Activated CD4-positive, alpha-beta T cell treated with anti-CD3 and anti-CD28 coated beads, Interleukin-2, amount 10 ng/mL, durations not matched to agents 24 days and 14 days (primary cell): ENCODE measurements at regions of chr3 and their contacts with region 1.

Region 1: DNA sequence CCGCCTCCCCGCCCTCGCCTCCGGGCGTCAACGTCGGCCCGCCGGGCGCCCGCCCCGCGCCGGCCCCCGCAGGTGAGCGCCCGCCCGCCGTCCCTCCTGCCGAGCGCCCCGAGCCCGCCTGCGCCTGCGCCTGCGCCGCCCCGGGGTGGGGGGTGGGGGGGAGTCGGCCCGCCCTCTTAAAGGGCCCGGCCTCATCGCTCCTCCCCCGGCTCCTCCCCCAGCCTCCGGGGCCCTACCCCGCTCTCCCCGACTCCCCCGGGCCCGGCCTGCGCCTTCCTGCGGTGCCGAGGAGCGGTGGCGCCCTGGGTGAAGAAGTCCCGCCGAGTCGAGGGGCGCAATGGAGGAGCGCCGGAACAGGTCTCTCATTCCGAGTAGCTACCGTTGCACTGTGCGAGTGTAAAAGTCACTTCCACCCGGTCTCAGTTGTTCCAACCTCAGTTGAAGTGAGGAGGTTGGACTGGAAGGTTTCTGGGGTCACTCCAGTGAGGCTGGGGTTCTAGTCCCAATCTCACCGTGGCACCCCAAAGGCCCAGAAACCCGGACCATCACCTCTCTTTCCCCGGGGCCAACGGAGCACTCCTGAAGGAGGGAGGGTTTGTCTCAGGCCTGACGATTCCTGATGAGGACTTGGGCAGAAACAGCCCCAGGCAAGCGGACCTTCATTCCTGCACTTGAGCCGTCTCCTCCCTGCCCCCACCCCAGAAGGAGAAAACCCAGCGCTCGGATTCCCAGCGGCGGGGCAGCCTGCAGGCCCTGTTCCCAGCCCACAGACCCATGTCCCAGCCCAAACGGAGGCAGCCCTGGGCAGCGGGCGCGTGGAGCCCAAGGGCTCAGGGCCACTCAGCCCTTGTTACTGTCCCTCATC is 1.5 kb upstream of the TNK2 start:
- DNase-seq: peak; percentile 96
- H3K4me3 Mint-ChIP-seq: peak overlapping the region; percentile 66
- H3K27ac Mint-ChIP-seq: peak overlapping the region; percentile 84
- H3K4me1 Mint-ChIP-seq: peaks cover 36% of the 10 kb centered on the region
- H3K27me3 Mint-ChIP-seq: no peaks in the 10 kb centered on the region

Region 2: DNA sequence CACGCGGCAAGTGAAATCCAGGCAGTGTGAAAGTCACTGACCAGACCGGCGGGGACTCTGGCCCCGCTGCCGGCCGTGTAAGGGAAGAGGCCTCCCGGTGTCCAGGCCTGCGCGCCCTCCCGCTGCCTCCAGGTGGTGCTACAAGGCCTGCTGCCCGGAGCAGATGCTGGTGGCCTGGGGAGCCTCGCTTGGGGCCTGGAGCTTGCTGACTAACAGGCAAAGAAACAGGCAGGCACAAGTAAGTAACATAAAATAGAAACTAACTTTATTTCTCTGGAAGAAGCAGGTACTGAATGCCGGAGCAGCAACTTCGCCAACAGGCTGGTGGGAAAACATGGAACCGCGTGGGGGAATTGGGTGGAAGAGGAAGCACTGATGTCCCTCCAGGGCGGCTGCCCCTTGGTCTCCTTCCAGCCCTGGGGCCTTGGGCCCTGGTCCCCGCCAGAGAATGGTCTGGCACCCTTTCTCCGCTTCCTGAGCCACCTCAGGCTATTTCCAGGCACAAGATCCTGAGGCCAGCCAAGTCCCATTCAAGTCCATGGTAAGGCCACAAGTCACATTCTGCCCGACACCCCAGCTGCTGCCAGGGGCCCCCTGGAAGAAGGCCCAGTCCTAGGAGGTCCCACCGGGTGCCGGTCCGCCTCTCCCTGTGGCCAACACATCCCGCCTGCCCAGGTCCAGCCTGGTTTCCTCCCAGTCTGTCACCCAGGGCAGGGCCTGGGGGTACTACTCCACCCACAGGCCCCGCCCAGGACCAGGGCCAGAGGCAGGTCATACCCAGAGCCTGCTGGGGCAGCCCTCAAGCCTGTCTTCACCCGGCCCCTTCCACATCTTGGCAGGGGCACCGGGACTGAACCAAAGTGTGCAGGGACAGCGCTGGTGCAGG is 46.5 kb before region 1 on chr3:
- intact Hi-C with region 1: loop called (anchors 1 kb)
- DNase-seq: peak; percentile 89
- H3K4me3 Mint-ChIP-seq: no peak overlapping the region
- H3K27ac Mint-ChIP-seq: no peak overlapping the region
- H3K4me1 Mint-ChIP-seq: peaks cover 6% of the 10 kb centered on the region
- H3K27me3 Mint-ChIP-seq: peaks cover 2% of the 10 kb centered on the region

Region 3: GRCh38 chr3:195894780-195895607 is 14.9 kb before region 1 on chr3:
- intact Hi-C with region 1: loop called (anchors 1 kb)
- DNase-seq: peak; percentile 91
- H3K4me3 Mint-ChIP-seq: peak overlapping the region; percentile 85
- H3K27ac Mint-ChIP-seq: peak overlapping the region; percentile 95
- H3K4me1 Mint-ChIP-seq: peaks cover 39% of the 10 kb centered on the region
- H3K27me3 Mint-ChIP-seq: no peaks in the 10 kb centered on the region

Region 4: DNA sequence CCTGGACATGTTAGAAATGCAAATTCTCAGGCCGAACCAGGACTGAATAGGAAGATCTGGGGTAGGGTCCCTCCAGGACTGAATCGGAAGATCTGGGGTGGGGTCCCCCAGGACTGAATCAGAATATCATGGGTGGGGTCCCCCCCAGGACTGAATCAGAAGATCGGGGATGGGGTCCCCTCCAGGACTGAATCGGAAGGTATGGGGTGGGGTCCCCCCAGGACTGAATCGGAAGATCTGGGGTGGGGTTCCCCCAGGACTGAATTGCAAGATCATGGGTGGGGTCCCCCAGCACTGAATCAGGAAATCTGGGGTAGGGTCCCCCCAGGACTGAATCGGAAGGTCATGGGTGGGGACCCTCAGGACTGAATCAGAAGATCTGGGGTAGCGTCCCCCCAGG is 46.7 kb after region 1 on chr3:
- intact Hi-C with region 1: loop called (anchors 10 kb)
- DNase-seq: no peak
- H3K4me3 Mint-ChIP-seq: peak overlapping the region; percentile 52
- H3K27ac Mint-ChIP-seq: peak overlapping the region; percentile 89
- H3K4me1 Mint-ChIP-seq: peaks cover 32% of the 10 kb centered on the region
- H3K27me3 Mint-ChIP-seq: no peaks in the 10 kb centered on the region

Region 5: GRCh38 chr3:196219194-196219978 is 309.5 kb after region 1 on chr3:
- intact Hi-C with region 1: no loop called
- DNase-seq: peak; percentile 91
- H3K4me3 Mint-ChIP-seq: peak overlapping the region; percentile 69
- H3K27ac Mint-ChIP-seq: peak overlapping the region; percentile 89
- H3K4me1 Mint-ChIP-seq: peaks cover 13% of the 10 kb centered on the region
- H3K27me3 Mint-ChIP-seq: no peaks in the 10 kb centered on the region